ENCODE measurements at regions of chr12 and their contacts with region 1.

Region 1: DNA sequence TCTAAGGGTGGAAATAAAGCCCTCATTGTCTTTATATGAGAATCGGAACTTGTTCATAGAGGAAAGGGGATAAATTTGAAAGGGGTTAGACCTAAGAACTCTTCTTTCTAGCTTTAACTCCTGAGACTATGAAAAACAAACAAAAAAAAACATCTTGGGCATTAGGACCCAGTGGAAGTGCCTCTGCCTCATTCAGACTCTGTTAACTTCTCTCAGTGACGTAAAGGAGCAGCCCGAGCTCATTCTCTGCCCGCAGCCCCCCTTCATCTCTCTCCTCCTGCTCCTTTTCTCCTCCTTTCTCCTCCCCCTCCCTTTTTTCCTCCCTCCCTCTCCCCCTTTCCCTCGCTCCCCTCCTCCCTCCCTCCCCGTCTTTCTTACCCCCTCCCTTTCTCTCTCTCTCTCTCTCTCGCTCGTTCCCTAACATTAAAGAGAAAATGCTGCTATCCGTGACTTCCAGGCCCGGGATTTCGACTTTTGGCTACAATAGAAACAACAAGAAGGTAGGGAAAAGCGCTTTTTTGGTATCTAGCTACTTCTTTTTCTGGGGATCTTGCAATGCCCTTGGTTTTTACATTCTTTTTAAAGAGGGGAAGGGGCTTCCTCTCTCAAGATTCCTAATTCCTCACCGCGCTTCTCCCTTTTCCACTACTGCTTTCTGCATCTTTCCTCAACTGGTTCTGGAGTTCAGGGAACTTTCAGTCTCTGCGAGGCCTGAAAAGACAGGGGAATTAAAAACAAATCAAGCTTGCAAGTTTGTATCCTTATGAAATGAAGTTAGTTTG is at the start of gene RBMS2:
- DNase-seq: peak; percentile 81
- H3K4me3 Mint-ChIP-seq: peak within 1 kb of the TSS; percentile 77
- H3K27ac Mint-ChIP-seq: peak within 1 kb of the TSS; percentile 75
- H3K4me1 Mint-ChIP-seq: peaks cover 52% of the 10 kb centered on the region
- H3K27me3 Mint-ChIP-seq: no peaks in the 10 kb centered on the region
- CTCF ChIP-seq: no peak
- total RNA-seq, gene RBMS2: 96.4 and 105 TPM in 2 replicates

Region 2: DNA sequence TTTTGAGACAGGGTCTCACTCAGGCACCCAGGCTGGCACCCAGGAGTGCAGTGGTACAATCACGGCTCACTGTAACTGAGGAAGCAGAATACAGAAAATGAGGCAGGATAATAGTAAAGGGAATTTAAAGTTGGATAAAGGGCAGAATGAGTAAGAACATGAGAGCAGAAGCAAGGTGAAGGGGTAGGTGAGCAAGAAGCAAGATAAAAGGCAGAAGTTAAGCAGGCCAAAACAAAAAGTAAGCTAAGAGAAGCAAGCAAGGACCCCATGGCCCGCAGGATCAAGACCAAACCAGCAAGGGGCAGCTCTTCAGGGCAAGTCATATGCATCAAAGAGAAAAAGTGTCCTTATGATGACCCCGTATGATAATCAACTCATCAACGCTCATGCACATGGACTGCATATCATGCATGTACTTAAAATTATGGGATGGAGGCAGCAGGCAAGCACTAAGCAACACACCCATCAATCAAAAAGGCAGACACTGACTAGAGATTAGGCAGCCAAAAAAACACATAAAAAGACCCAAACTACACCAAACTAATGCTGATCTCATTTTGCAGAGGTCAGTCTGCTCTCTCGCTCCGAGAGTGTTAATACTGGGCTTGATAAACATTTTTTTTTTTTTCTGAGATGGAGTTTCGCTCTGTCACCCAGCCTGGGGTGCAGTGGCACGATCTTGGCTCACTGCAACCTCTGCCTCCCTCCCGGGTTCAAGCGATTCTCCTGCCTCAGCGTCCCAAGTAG is 84.2 kb before region 1 on chr12:
- CTCF ChIA-PET with region 1: interaction called, 11 read pairs
- intact Hi-C with region 1: no loop called
- DNase-seq: no peak
- H3K4me3 Mint-ChIP-seq: no peak overlapping the region
- H3K27ac Mint-ChIP-seq: no peak overlapping the region
- H3K4me1 Mint-ChIP-seq: peaks cover 6% of the 10 kb centered on the region
- H3K27me3 Mint-ChIP-seq: no peaks in the 10 kb centered on the region
- CTCF ChIP-seq: no peak

Region 3: DNA sequence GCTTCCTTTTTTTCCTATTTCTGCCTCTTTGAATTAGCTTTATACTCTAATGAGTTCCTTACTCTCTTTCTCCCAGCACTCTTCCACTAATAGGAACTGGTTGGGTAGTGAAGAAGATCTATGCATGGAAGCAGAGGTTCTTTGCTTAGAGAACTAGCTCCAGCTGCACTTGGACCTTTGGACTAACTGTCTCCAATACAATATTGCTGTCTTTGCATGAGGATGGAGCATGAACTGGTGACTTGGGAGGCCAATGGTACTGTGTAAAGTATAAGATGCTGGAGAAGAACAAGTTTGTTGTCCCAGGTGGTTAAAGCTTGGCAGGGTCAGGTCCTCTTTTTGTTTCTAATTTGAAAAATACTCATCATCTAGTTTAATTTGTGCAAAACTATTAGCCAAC is 31.4 kb before region 1 on chr12:
- CTCF ChIA-PET with region 1: no interaction called
- intact Hi-C with region 1: no loop called
- DNase-seq: no peak
- H3K4me3 Mint-ChIP-seq: no peak overlapping the region
- H3K27ac Mint-ChIP-seq: no peak overlapping the region
- H3K4me1 Mint-ChIP-seq: peaks cover 18% of the 10 kb centered on the region
- H3K27me3 Mint-ChIP-seq: peaks cover 45% of the 10 kb centered on the region
- CTCF ChIP-seq: no peak

Region 4: GRCh38 chr12:56645717-56646446 is 124.1 kb after region 1 on chr12 and contains the start of gene ATP5F1B:
- CTCF ChIA-PET with region 1: no interaction called
- intact Hi-C with region 1: no loop called
- DNase-seq: peak; percentile 97
- H3K4me3 Mint-ChIP-seq: peak within 1 kb of the TSS; percentile 93
- H3K27ac Mint-ChIP-seq: peak within 1 kb of the TSS; percentile 91
- H3K4me1 Mint-ChIP-seq: peaks cover 18% of the 10 kb centered on the region
- H3K27me3 Mint-ChIP-seq: no peaks in the 10 kb centered on the region
- CTCF ChIP-seq: no peak
- total RNA-seq, gene ATP5F1B: 822 and 875 TPM in 2 replicates